ENCODE measurements at regions of chr5 and their contacts with region 1.

Region 1: GRCh38 chr5:40688127-40688761 is 8.5 kb downstream of the PTGER4 start:
- DNase-seq: peak; percentile 85
- ATAC-seq: peak; percentile 93
- H3K4me3 ChIP-seq: no peak overlapping the region
- H3K27ac ChIP-seq: no peak overlapping the region
- H3K4me1 ChIP-seq: peaks cover 15 to 27% of the 10 kb centered on the region in 2 experiments; a peak in 3 of 4 replicates
- H3K27me3 ChIP-seq: no peaks in the 10 kb centered on the region
- CTCF ChIP-seq: peak; percentile 73 to 87 (median 75)
- POLR2A ChIP-seq: no peak
- RAD21 ChIP-seq: peak; percentile 94

Region 2: GRCh38 chr5:39584927-39585326 is 1103.3 kb before region 1 on chr5:
- CTCF ChIA-PET with region 1: no interaction called
- POLR2A ChIA-PET with region 1: no interaction called
- RAD21 ChIA-PET with region 1: no interaction called
- intact Hi-C with region 1: loop called (anchors 5 kb)
- DNase-seq: no peak
- ATAC-seq: no peak
- H3K4me3 ChIP-seq: no peak overlapping the region
- H3K27ac ChIP-seq: no peak overlapping the region
- H3K4me1 ChIP-seq: no peaks in the 10 kb centered on the region
- H3K27me3 ChIP-seq: no peaks in the 10 kb centered on the region
- CTCF ChIP-seq: no peak
- POLR2A ChIP-seq: no peak
- RAD21 ChIP-seq: no peak

Region 3: GRCh38 chr5:39948867-39949468 is 739.3 kb before region 1 on chr5:
- CTCF ChIA-PET with region 1: interaction called, 4 read pairs
- POLR2A ChIA-PET with region 1: no interaction called
- RAD21 ChIA-PET with region 1: no interaction called
- intact Hi-C with region 1: loop called (anchors 1 kb)
- DNase-seq: peak; percentile 69
- ATAC-seq: peak; percentile 87
- H3K4me3 ChIP-seq: no peak overlapping the region
- H3K27ac ChIP-seq: no peak overlapping the region
- H3K4me1 ChIP-seq: no peaks in the 10 kb centered on the region
- H3K27me3 ChIP-seq: no peaks in the 10 kb centered on the region
- CTCF ChIP-seq: peak; percentile 52 to 74 (median 58); a peak in 5 of 6 replicates
- POLR2A ChIP-seq: no peak
- RAD21 ChIP-seq: peak; percentile 76

Region 4: DNA sequence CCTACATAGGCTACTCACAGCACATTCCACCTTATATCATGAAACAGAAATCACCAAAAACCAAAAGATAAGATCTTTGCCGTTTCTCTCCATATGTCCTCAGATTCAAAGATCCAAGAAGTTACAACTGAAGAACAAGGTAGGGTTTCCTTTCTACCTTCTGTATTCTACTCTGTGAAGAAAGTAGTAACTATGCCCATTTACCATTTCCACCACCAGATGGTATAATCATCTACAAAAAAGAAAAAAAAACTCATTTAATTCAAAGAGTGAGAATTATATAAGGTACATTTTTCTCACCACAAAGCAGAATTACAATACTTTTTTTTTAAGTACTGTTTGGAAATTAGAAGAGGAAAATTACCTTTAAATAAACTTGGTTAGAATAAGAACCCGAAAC is 181.1 kb before region 1 on chr5:
- CTCF ChIA-PET with region 1: no interaction called
- POLR2A ChIA-PET with region 1: no interaction called
- RAD21 ChIA-PET with region 1: no interaction called
- intact Hi-C with region 1: loop called (anchors 5 kb)
- DNase-seq: no peak
- ATAC-seq: no peak
- H3K4me3 ChIP-seq: no peak overlapping the region
- H3K27ac ChIP-seq: no peak overlapping the region
- H3K4me1 ChIP-seq: no peaks in the 10 kb centered on the region
- H3K27me3 ChIP-seq: no peaks in the 10 kb centered on the region
- CTCF ChIP-seq: peak in 1 of 3 experiments; percentile 11; a peak in 2 of 6 replicates
- POLR2A ChIP-seq: no peak
- RAD21 ChIP-seq: peak; percentile 25; the same call in 1 of the 2 replicates

Region 5: DNA sequence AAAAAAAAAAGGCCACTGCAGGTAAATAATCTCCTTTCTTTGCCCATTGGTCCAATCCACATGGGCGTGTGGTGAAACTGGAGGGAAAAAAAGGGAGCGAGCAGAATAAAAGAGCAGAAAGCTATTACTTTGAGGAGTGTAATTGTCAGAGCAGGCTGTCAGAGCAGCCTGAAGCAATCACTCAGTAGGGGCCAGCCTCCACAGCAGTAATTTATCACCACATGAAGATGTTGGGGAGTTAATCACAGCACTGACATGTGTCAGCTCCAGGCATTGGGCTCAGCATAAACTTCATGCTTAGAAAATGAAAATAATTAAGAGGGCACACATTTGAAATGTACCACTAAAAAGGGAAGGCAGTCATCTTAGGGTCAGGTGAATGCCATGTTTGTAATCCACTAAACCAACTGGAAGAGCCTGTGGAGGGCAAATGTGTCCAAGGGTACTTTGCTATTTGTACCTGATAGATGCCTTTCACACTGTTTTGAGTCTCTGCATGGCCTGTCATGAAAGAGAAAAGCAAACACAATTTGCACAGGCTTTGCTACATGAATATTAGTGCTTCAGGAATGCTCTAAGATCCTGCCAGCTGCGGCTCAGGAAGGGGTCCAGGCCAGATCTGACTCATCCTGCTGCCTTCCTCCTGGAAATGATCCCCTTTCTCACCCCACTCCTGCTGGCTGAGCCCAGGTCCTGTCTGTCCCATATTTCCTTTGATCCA is 11.5 kb before region 1 on chr5:
- CTCF ChIA-PET with region 1: no interaction called
- POLR2A ChIA-PET with region 1: no interaction called
- RAD21 ChIA-PET with region 1: no interaction called
- intact Hi-C with region 1: no loop called
- DNase-seq: no peak
- ATAC-seq: no peak
- H3K4me3 ChIP-seq: no peak overlapping the region
- H3K27ac ChIP-seq: no peak overlapping the region; the same call in 1 of the 2 replicates
- H3K4me1 ChIP-seq: peaks cover 19 to 33% of the 10 kb centered on the region in 2 experiments
- H3K27me3 ChIP-seq: no peaks in the 10 kb centered on the region
- CTCF ChIP-seq: no peak
- POLR2A ChIP-seq: no peak
- RAD21 ChIP-seq: no peak

Region 6: DNA sequence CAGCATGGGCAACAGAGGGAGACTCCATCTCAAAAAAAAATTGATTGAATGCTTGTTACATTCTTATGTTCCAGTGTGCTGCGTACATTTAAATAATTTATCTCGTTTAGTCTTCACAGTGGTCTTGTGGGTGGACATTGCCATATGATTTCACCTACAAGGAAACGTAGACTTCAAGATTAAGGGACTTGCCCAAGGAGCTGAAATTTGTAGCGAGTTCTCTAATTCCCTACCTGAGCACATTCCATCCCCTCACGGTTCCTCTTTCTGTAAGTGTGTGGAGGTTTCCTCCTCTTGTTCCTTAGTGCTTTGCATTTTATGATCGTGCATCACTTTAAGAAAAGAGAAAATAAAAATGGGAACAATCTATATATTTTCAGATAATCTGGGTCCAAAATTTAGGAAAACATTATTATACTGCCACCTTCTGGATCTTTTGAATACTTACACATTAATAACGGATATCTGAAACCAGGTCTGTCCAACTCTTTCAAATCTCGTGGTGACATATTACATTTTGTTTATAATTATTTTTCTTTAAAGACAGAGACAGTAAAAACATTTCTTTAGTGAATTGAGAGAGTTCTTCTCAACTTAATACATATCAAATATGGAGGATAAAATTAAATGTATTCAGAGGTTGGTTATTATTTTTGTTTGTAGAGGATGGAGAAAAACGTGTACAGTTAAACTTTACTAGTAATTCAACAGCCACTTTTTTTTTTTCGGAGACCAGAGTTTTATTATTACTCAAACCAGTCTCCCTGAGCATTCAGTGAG is 191.1 kb after region 1 on chr5:
- CTCF ChIA-PET with region 1: no interaction called
- POLR2A ChIA-PET with region 1: no interaction called
- RAD21 ChIA-PET with region 1: no interaction called
- intact Hi-C with region 1: loop called (anchors 5 kb)
- DNase-seq: peak; percentile 13
- ATAC-seq: peak; percentile 71
- H3K4me3 ChIP-seq: no peak overlapping the region
- H3K27ac ChIP-seq: no peak overlapping the region
- H3K4me1 ChIP-seq: peaks cover 0 to 4% of the 10 kb centered on the region in 2 experiments; a peak in 1 of 4 replicates
- H3K27me3 ChIP-seq: no peaks in the 10 kb centered on the region
- CTCF ChIP-seq: peak; percentile 16 to 63 (median 45); a peak in 3 of 6 replicates
- POLR2A ChIP-seq: no peak
- RAD21 ChIP-seq: peak; percentile 65